BJ (cell line): ENCODE measurements at regions of chr11 and their contacts with region 1.

Region 1: DNA sequence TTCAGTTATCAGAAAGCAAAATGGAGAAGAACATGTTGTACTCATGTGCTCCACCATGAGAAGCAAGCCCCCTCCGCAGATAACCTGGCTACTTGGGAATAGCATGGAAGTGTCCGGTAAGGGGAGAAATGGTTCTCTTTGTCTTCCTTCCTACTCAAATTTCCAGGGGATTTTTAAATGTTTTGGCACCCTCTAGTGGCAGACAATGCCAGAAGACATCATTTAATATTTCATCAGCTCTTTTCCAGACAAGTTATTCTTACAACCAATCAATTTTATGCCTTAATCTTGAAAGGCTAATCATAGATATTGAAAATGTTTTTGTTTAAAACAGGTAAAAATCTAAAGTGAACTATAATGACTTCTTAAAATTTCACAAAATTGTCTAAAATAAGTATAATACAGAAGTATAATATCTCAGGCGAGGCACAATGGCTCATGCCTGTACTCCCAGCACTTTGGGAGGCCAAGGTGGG is 15.7 kb downstream of the CRTAM start:
- DNase-seq: no peak
- H3K4me3 ChIP-seq: no peak overlapping the region
- H3K27me3 ChIP-seq: no peaks in the 10 kb centered on the region
- CTCF ChIP-seq: peak; percentile 59

Region 2: GRCh38 chr11:122578168-122578825 is 275.7 kb before region 1 on chr11:
- CTCF ChIA-PET with region 1: interaction called, 12 read pairs
- POLR2A ChIA-PET with region 1: no interaction called
- DNase-seq: no peak
- H3K4me3 ChIP-seq: no peak overlapping the region
- H3K27me3 ChIP-seq: no peaks in the 10 kb centered on the region
- CTCF ChIP-seq: peak; percentile 37; the same call in 1 of the 2 replicates

Region 3: GRCh38 chr11:122781378-122782195 is 72.4 kb before region 1 on chr11:
- CTCF ChIA-PET with region 1: interaction called, 46 read pairs
- POLR2A ChIA-PET with region 1: no interaction called
- DNase-seq: peak; percentile 49
- H3K4me3 ChIP-seq: no peak overlapping the region
- H3K27me3 ChIP-seq: no peaks in the 10 kb centered on the region
- CTCF ChIP-seq: peak; percentile 95

Region 4: DNA sequence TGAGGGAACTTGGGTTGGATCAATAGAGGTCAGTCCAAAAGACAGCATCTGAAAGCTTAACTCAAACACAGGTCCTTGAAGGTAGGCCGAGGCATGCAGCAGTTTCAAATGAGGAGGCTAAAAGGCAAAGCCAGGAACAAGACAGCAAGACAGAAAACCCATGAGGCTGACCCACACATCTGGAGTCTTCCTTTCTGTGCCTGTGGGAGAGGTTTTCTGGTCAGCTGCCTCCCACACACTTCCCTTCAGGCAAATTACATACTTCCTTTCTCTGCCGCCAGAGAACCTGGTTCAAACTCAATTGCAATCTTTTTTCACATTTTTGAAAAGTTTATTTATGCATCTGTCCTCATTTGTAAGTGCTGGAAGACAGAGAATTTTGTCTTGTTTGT is 45.5 kb before region 1 on chr11:
- CTCF ChIA-PET with region 1: interaction called, 26 read pairs
- POLR2A ChIA-PET with region 1: no interaction called
- DNase-seq: no peak
- H3K4me3 ChIP-seq: no peak overlapping the region
- H3K27me3 ChIP-seq: no peaks in the 10 kb centered on the region
- CTCF ChIP-seq: 0 out of 2 replicates have a peak, but pooled peaks have one; percentile 10

Region 5: GRCh38 chr11:122832721-122833470 is 21.1 kb before region 1 on chr11:
- CTCF ChIA-PET with region 1: interaction called, 13 read pairs
- POLR2A ChIA-PET with region 1: no interaction called
- DNase-seq: no peak
- H3K4me3 ChIP-seq: no peak overlapping the region
- H3K27me3 ChIP-seq: no peaks in the 10 kb centered on the region
- CTCF ChIP-seq: no peak

Region 6: GRCh38 chr11:123083623-123084029 is 229.6 kb after region 1 on chr11:
- CTCF ChIA-PET with region 1: no interaction called
- POLR2A ChIA-PET with region 1: no interaction called
- DNase-seq: peak; percentile 91
- H3K4me3 ChIP-seq: no peak overlapping the region
- H3K27me3 ChIP-seq: no peaks in the 10 kb centered on the region
- CTCF ChIP-seq: no peak